Gastrocnemius medialis (tissue), 4 donors: ENCODE measurements at regions of chr1 and their contacts with region 1.

Region 1: DNA sequence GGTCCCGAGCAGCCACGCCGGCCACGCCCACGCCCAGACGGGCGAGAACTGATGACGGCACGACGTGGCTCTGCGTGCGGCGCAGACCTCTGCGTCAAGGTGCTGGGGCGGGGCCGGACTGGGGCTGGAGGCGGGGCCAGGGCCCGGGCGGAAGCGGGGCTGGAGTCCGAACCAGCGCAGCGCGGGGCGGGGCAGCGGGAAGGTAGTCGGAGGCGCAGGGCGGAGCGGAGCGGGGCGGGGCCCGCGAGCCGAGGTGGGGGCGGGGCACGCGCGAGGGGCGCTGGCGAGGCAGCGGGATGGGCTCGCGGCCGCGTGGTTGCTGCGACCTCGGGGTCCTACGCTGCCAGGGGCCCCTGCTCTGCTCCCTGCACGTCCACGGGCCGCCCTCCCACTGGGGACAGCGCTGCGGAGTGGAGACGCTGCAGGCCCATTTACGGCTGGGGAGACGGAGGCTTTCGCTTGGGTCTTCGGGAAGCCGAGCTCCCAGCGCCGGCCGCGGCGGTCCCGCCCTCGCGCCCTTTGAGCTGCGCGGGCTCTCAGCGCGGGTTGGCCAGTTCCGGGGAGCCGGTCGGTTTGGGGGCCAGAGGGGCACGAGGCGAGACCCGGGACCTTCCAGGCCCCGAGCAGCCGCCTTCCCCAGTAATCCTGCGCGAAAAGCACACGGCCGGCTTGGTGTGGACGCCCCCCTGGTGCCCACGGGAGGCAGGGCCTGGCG is at the start of gene PEX10:
- DNase-seq: peak; percentile 94 to 95
- ATAC-seq: peak; percentile 91 to 93
- H3K4me3 ChIP-seq: peak within 1 kb of the TSS; percentile 64 to 97 (median 74)
- H3K27ac ChIP-seq: peak within 1 kb of the TSS; percentile 67 to 81 (median 78)
- H3K4me1 ChIP-seq: peaks cover 22 to 24% of the 10 kb centered on the region in 2 donors
- H3K27me3 ChIP-seq: peaks cover 14 to 26% (median 22%) of the 10 kb centered on the region in 3 donors
- CTCF ChIP-seq: no peak
- POLR2A ChIP-seq: peak in 1 of 2 donors; percentile 55
- total RNA-seq, gene PEX10: 19.2 to 25.7 (median 22.6) TPM

Region 2: GRCh38 chr1:2031546-2032540 is 380.8 kb before region 1 on chr1:
- in situ Hi-C with region 1: no loop called
- intact Hi-C with region 1: no loop called
- DNase-seq: no peak
- ATAC-seq: no peak
- H3K4me3 ChIP-seq: no peak overlapping the region
- H3K27ac ChIP-seq: no peak overlapping the region
- H3K4me1 ChIP-seq: no peaks in the 10 kb centered on the region
- H3K27me3 ChIP-seq: peaks cover 0 to 17% (median 5%) of the 10 kb centered on the region in 3 donors
- CTCF ChIP-seq: no peak
- POLR2A ChIP-seq: no peak

Region 3: GRCh38 chr1:2133039-2133878 is 279.4 kb before region 1 on chr1:
- in situ Hi-C with region 1: no loop called
- intact Hi-C with region 1: loop called (anchors 1 kb)
- DNase-seq: peak; percentile 85 to 88
- ATAC-seq: peak; percentile 81 to 88
- H3K4me3 ChIP-seq: peak overlapping the region; percentile 38 to 52 (median 46)
- H3K27ac ChIP-seq: peak overlapping the region; percentile 70 to 77 (median 73)
- H3K4me1 ChIP-seq: peaks cover 0 to 13% of the 10 kb centered on the region in 2 donors
- H3K27me3 ChIP-seq: peaks cover 28 to 52% (median 32%) of the 10 kb centered on the region in 3 donors
- CTCF ChIP-seq: no peak
- POLR2A ChIP-seq: peak; percentile 31 to 53

Region 4: GRCh38 chr1:2525920-2526823 is 113.5 kb after region 1 on chr1 and contains the start of gene PANK4:
- in situ Hi-C with region 1: no loop called
- intact Hi-C with region 1: loop called (anchors 1 kb)
- DNase-seq: peak; percentile 90 to 91
- ATAC-seq: peak; percentile 75 to 84
- H3K4me3 ChIP-seq: peak within 1 kb of the TSS; percentile 71 to 99 (median 95)
- H3K27ac ChIP-seq: peak within 1 kb of the TSS; percentile 85 to 95 (median 88)
- H3K4me1 ChIP-seq: peaks cover 70 to 72% of the 10 kb centered on the region in 2 donors
- H3K27me3 ChIP-seq: no peaks in the 10 kb centered on the region
- CTCF ChIP-seq: no peak
- POLR2A ChIP-seq: peak; percentile 81 to 82
- total RNA-seq, gene PANK4: 27.5 to 54.2 (median 38.5) TPM

Region 5: DNA sequence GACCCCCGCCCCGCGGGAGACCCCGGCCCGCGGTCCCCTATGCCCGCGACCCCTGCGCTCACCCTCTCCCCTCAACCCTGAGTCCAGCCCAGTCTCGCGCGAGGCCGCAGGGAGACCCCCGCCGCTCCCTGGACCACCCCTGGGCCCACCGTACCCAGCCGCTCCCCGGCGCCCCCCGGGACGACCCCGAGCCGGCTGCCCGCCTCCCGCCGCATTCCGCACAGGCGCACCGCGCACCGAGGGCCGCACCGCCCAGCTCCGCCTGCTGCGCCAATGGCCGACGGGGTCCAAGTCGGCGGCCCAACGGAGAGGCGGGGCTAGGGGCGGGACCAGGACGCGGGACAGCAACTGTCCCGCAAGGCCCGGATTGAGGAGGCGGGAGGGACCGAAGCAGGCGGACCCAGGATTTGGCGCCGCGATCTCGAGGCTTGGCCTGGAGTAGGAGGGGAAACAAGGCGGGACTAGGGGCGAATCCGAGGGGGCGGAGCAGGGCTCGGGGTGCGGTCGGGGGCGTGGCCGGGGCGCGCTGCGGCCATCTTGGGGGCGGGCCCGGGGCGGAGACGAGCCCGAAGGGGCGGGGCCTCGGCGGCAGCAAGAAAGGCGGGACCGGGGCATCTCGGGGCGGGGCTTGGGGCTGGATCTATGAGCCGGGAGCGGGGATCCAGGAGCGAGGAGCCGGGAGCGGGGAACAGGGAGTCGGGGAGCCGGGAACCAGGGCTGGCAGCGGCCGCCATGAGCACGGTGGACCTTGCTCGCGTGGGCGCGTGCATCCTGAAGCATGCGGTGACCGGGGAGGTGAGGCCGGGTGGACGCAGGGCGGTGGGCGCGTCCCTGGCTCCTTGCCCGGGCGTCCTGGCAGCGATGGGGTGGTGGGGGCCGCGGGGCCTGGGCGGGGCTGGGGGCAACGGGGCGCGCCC is 173.7 kb after region 1 on chr1 and contains the start of gene PRXL2B:
- in situ Hi-C with region 1: no loop called
- intact Hi-C with region 1: loop called (anchors 1 kb)
- DNase-seq: peak; percentile 98
- ATAC-seq: peak; percentile 92 to 93
- H3K4me3 ChIP-seq: peak within 1 kb of the TSS; percentile 65 to 92 (median 71)
- H3K27ac ChIP-seq: peak within 1 kb of the TSS; percentile 87 to 97 (median 91)
- H3K4me1 ChIP-seq: peaks cover 11 to 17% of the 10 kb centered on the region in 2 donors
- H3K27me3 ChIP-seq: peaks cover 0 to 8% (median 6%) of the 10 kb centered on the region in 3 donors
- CTCF ChIP-seq: no peak
- POLR2A ChIP-seq: peak; percentile 79 to 83
- total RNA-seq, gene PRXL2B: 0.52 to 2.7 (median 1.1) TPM

Region 6: DNA sequence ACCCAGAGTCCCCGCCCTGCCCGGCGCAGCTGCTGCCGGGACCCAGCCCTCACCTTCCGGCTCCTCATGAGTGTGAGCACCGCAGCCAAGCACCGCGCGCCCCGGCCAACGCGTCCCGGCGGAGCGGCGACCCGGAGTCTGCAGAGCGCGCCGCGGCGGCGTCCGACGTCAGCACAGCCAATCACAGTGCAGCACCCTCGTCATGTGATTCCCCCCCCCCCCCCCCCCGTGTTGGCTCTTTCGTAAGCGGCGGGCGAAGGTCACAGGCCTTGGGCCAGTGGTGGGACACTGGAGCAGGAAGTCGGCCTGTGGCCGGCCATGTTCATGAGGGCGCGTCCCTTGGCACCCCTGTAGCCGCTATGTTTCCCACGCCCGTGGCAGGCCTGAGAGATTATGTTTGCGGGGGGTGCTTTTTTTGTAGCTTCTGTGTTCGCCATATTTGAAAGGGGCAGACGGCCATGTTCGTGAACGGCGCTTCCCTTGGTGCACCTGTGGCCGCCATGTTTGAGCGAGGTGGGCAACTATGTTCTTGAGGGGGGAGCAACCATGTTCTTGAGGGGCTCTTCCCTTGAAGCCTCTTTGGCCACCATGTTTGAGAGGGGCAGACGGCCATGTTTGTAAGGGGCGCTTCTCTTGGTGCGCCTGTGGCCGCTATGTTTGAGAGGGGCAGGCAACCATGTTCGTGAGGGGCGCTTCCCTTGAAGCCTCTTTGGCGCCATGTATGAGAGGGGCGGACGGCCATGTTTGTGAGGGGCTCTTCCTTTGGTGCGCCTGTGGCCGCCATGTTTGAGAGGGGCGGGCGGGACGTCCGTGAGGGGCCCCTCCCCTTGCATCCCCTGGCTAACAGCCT is 1487.7 kb after region 1 on chr1 and contains the start of gene C1orf174:
- in situ Hi-C with region 1: no loop called
- intact Hi-C with region 1: loop called (anchors 1 kb)
- DNase-seq: peak; percentile 94 to 97
- ATAC-seq: peak; percentile 89 to 90
- H3K4me3 ChIP-seq: peak within 1 kb of the TSS; percentile 91 to 99 (median 96)
- H3K27ac ChIP-seq: peak within 1 kb of the TSS; percentile 97 to 99 (median 98)
- H3K4me1 ChIP-seq: peaks cover 8 to 9% of the 10 kb centered on the region in 2 donors
- H3K27me3 ChIP-seq: no peaks in the 10 kb centered on the region
- CTCF ChIP-seq: no peak
- POLR2A ChIP-seq: peak; percentile 47 to 50
- total RNA-seq, gene C1orf174: 10.1 to 28.5 (median 13.5) TPM